ENCODE measurements at regions of chr2 and their contacts with region 1.

Region 1: GRCh38 chr2:206800506-206801417 is 35.4 kb downstream of the FASTKD2 start:
- DNase-seq: peak in 8 of 9 experiments; percentile 13 to 69 (median 43)
- ATAC-seq: peak; percentile 61
- H3K4me3 ChIP-seq: peak overlapping the region; percentile 7 to 17
- H3K4me3 Mint-ChIP-seq: peak overlapping the region; percentile 71
- H3K27ac ChIP-seq: no peak overlapping the region
- H3K27ac Mint-ChIP-seq: no peak overlapping the region
- H3K4me1 ChIP-seq: no peaks in the 10 kb centered on the region
- H3K4me1 Mint-ChIP-seq: peaks cover 18% of the 10 kb centered on the region
- H3K27me3 ChIP-seq: no peaks in the 10 kb centered on the region
- H3K27me3 Mint-ChIP-seq: no peaks in the 10 kb centered on the region
- CTCF ChIP-seq: peak; percentile 70

Region 2: GRCh38 chr2:206783718-206784117 is 17.0 kb before region 1 on chr2:
- CTCF ChIA-PET with region 1: interaction called, 13 read pairs
- POLR2A ChIA-PET with region 1: no interaction called
- intact Hi-C with region 1: no loop called
- DNase-seq: no peak
- ATAC-seq: peak; percentile 44
- H3K4me3 ChIP-seq: no peak overlapping the region
- H3K4me3 Mint-ChIP-seq: no peak overlapping the region
- H3K27ac ChIP-seq: no peak overlapping the region
- H3K27ac Mint-ChIP-seq: no peak overlapping the region
- H3K4me1 ChIP-seq: no peaks in the 10 kb centered on the region
- H3K4me1 Mint-ChIP-seq: peaks cover 11% of the 10 kb centered on the region
- H3K27me3 ChIP-seq: no peaks in the 10 kb centered on the region
- H3K27me3 Mint-ChIP-seq: no peaks in the 10 kb centered on the region
- CTCF ChIP-seq: no peak

Region 3: GRCh38 chr2:206858972-206859739 is 58.4 kb after region 1 on chr2:
- CTCF ChIA-PET with region 1: no interaction called
- POLR2A ChIA-PET with region 1: no interaction called
- intact Hi-C with region 1: loop called in 1 of 2 experiments (anchors 2 kb)
- DNase-seq: peak in 4 of 9 experiments; percentile 8 to 57 (median 42)
- ATAC-seq: peak; percentile 86
- H3K4me3 ChIP-seq: peak overlapping the region; percentile 1 to 7
- H3K4me3 Mint-ChIP-seq: peak overlapping the region; percentile 76
- H3K27ac ChIP-seq: peak overlapping the region; percentile 23 to 29
- H3K27ac Mint-ChIP-seq: peak overlapping the region; percentile 93
- H3K4me1 ChIP-seq: peaks cover 16% of the 10 kb centered on the region
- H3K4me1 Mint-ChIP-seq: peaks cover 24% of the 10 kb centered on the region
- H3K27me3 ChIP-seq: no peaks in the 10 kb centered on the region
- H3K27me3 Mint-ChIP-seq: no peaks in the 10 kb centered on the region
- CTCF ChIP-seq: no peak

Region 4: GRCh38 chr2:206935991-206936842 is 135.5 kb after region 1 on chr2:
- CTCF ChIA-PET with region 1: no interaction called
- POLR2A ChIA-PET with region 1: no interaction called
- intact Hi-C with region 1: no loop called
- DNase-seq: no peak
- ATAC-seq: no peak
- H3K4me3 ChIP-seq: no peak overlapping the region
- H3K4me3 Mint-ChIP-seq: no peak overlapping the region
- H3K27ac ChIP-seq: no peak overlapping the region
- H3K27ac Mint-ChIP-seq: no peak overlapping the region
- H3K4me1 ChIP-seq: no peaks in the 10 kb centered on the region
- H3K4me1 Mint-ChIP-seq: no peaks in the 10 kb centered on the region
- H3K27me3 ChIP-seq: no peaks in the 10 kb centered on the region
- H3K27me3 Mint-ChIP-seq: peaks cover 2% of the 10 kb centered on the region
- CTCF ChIP-seq: no peak

Region 5: DNA sequence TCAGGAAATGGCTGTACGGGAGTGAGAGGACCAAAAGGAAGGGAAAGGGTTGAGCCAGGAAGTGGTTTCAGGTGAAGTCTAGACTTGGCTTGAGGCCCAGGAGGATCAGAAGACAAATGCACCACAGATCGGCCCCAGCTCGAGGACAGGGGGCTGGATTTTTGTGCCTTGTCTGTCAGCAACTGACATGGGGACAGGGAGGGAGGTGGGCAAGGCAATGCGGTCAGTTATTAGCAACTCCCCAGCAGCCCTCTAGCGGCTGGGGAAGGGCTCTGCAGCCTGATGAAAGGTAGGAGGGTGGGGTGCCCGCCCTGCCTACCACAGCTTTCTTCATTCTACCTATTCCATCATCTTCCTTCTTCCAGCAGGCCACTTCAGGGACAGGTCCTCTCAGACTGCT is 188.5 kb after region 1 on chr2:
- CTCF ChIA-PET with region 1: interaction called, 5 read pairs
- POLR2A ChIA-PET with region 1: no interaction called
- intact Hi-C with region 1: loop called in 1 of 2 experiments (anchors 5 kb)
- DNase-seq: peak in 2 of 9 experiments; percentile 6 to 28
- ATAC-seq: no peak
- H3K4me3 ChIP-seq: no peak overlapping the region
- H3K4me3 Mint-ChIP-seq: no peak overlapping the region
- H3K27ac ChIP-seq: no peak overlapping the region
- H3K27ac Mint-ChIP-seq: peak overlapping the region; percentile 19
- H3K4me1 ChIP-seq: peaks cover 14% of the 10 kb centered on the region
- H3K4me1 Mint-ChIP-seq: peaks cover 14% of the 10 kb centered on the region
- H3K27me3 ChIP-seq: no peaks in the 10 kb centered on the region
- H3K27me3 Mint-ChIP-seq: no peaks in the 10 kb centered on the region
- CTCF ChIP-seq: no peak

Region 6: GRCh38 chr2:207107551-207107950 is 306.8 kb after region 1 on chr2:
- CTCF ChIA-PET with region 1: no interaction called
- POLR2A ChIA-PET with region 1: no interaction called
- intact Hi-C with region 1: no loop called
- DNase-seq: peak in 3 of 9 experiments; percentile 22 to 53 (median 36)
- ATAC-seq: no peak
- H3K4me3 ChIP-seq: no peak overlapping the region
- H3K4me3 Mint-ChIP-seq: no peak overlapping the region
- H3K27ac ChIP-seq: no peak overlapping the region
- H3K27ac Mint-ChIP-seq: no peak overlapping the region
- H3K4me1 ChIP-seq: peaks cover 21% of the 10 kb centered on the region
- H3K4me1 Mint-ChIP-seq: peaks cover 41% of the 10 kb centered on the region
- H3K27me3 ChIP-seq: no peaks in the 10 kb centered on the region
- H3K27me3 Mint-ChIP-seq: no peaks in the 10 kb centered on the region
- CTCF ChIP-seq: no peak

Region 7: DNA sequence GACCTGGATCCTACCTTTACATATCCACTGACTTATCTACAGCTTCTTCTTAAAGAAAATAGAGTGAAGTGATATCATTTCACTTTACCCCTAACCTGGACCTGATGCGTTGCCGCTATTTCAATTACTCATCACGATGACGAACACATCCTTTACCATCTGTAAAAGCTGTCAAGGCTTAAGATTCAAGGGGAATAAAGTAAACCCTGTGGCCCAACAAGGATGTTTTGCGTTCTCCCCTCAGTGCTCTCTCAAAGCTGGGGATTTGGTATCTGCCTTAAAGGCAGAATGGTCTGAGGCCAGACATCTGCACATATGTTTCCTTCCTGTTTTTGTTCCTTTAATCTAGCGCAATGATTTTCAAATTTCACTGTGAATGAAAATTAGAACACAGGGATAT is 465.1 kb after region 1 on chr2:
- CTCF ChIA-PET with region 1: interaction called, 3 read pairs
- POLR2A ChIA-PET with region 1: no interaction called
- intact Hi-C with region 1: loop called in 1 of 2 experiments (anchors 10 kb)
- DNase-seq: no peak
- ATAC-seq: no peak
- H3K4me3 ChIP-seq: no peak overlapping the region
- H3K4me3 Mint-ChIP-seq: no peak overlapping the region
- H3K27ac ChIP-seq: no peak overlapping the region
- H3K27ac Mint-ChIP-seq: no peak overlapping the region
- H3K4me1 ChIP-seq: no peaks in the 10 kb centered on the region
- H3K4me1 Mint-ChIP-seq: no peaks in the 10 kb centered on the region
- H3K27me3 ChIP-seq: no peaks in the 10 kb centered on the region
- H3K27me3 Mint-ChIP-seq: no peaks in the 10 kb centered on the region
- CTCF ChIP-seq: no peak